Activated T-helper 1 cell treated with anti-CD3 and anti-CD28 coated beads, Interleukin-12 subunit alpha, Interleukin-12 subunit beta, Interleukin-2, Interleukin-4 antibody, amounts not matched to agents 30 ng/mL and 10 ng/mL and 1 ng/mL, durations not matched to agents 14 hours and 24 hours and 36 hours (primary cell): ENCODE measurements at regions of chr12 and their contacts with region 1.

Region 1: DNA sequence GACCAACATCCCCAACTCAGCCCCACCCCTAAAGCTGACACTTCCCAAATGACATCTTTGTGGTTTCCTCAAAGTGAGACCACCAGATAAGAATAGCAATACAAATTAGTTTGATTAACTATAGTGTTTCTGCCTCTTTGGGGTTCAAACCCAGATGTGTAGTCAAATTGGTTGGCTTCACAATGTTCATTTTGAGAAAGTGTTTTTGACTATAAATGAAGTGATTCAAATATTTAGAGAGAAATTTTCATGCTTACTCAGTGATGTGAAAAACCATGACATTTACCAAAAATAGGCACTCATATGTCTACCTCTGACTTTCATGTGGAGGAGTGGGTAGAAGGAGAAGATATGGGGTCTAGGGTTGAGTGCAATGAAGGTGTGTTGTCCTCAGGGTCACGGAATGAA is 218.4 kb downstream of the BCAT1 start:
- DNase-seq: no peak
- H3K4me3 Mint-ChIP-seq: no peak overlapping the region
- H3K27ac Mint-ChIP-seq: no peak overlapping the region
- H3K4me1 Mint-ChIP-seq: peaks cover 19% of the 10 kb centered on the region
- H3K27me3 Mint-ChIP-seq: no peaks in the 10 kb centered on the region

Region 2: GRCh38 chr12:24596768-24597388 is 133.6 kb before region 1 on chr12:
- intact Hi-C with region 1: loop called (anchors 1 kb)
- DNase-seq: no peak
- H3K4me3 Mint-ChIP-seq: no peak overlapping the region
- H3K27ac Mint-ChIP-seq: no peak overlapping the region
- H3K4me1 Mint-ChIP-seq: no peaks in the 10 kb centered on the region
- H3K27me3 Mint-ChIP-seq: peaks cover 2% of the 10 kb centered on the region

Region 3: DNA sequence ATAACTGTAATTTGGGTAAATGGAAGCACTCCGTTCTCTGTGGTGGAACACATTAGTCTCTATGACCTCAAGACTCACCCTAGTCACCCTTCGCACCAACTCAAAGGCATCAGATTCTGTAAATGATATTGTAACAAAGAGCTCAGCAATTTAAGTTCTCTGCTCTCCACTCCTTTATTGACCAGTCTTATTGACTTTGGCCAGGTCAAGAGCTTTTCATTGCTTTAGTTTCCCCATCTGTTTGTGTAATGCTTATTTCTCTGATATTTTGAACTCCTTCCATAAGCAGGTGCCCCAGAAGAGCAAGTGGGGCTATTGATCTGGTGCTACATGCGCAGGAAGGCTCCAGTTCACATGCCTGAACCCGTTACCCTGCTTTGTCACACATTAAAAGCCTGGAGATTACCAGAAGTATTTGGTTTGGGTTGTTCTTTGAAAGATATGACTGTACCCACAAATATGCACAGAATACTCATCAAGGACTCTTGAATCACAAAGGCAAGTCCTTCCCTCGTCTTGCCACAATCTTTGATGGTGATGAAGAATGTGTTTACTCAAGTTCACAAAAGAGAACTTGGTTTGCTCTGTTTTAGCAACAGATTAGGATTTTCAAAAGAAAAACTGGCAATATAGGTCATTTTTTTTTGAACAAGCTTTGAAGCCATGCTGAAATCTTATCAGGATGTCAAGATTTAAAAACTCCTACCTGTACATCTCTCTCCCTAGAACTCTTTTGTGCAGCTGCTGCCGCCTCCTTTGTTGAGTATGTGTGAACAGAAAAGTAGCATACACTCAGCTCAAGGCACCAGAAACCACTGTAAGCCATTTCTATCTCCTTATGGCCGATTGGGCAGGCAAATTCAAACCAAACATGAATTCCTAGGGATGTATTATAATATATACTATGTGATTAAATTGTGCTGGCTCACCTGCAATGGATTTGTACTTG is 24.5 kb after region 1 on chr12:
- intact Hi-C with region 1: loop called (anchors 1 kb)
- DNase-seq: no peak
- H3K4me3 Mint-ChIP-seq: peak overlapping the region; percentile 54
- H3K27ac Mint-ChIP-seq: peak overlapping the region; percentile 85
- H3K4me1 Mint-ChIP-seq: peaks cover 51% of the 10 kb centered on the region
- H3K27me3 Mint-ChIP-seq: no peaks in the 10 kb centered on the region

Region 4: DNA sequence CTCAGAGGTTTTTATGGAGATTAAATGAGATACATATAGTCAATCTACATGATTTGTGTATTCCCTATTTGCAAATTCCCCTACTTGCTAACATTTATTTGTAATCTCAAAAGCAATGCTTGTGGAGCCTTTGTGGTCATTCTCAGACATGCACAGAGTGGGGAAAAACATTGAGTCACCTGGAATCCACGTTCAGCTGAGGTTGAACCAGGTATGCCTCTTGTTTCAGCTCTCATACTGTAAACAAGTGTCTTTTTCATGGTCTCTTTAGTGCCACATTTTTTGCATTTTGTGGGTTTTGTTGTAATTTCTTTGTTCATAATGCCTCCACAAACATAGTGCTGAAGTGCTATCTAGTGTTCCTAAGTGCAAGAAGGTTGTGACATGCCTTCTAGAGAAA is 36.5 kb after region 1 on chr12:
- intact Hi-C with region 1: loop called (anchors 1 kb)
- DNase-seq: no peak
- H3K4me3 Mint-ChIP-seq: no peak overlapping the region
- H3K27ac Mint-ChIP-seq: no peak overlapping the region
- H3K4me1 Mint-ChIP-seq: peaks cover 7% of the 10 kb centered on the region
- H3K27me3 Mint-ChIP-seq: no peaks in the 10 kb centered on the region

Region 5: GRCh38 chr12:24822121-24822899 is 91.8 kb after region 1 on chr12:
- intact Hi-C with region 1: loop called (anchors 5 kb)
- DNase-seq: no peak
- H3K4me3 Mint-ChIP-seq: peak overlapping the region; percentile 48
- H3K27ac Mint-ChIP-seq: peak overlapping the region; percentile 91
- H3K4me1 Mint-ChIP-seq: peaks cover 29% of the 10 kb centered on the region
- H3K27me3 Mint-ChIP-seq: no peaks in the 10 kb centered on the region

Region 6: DNA sequence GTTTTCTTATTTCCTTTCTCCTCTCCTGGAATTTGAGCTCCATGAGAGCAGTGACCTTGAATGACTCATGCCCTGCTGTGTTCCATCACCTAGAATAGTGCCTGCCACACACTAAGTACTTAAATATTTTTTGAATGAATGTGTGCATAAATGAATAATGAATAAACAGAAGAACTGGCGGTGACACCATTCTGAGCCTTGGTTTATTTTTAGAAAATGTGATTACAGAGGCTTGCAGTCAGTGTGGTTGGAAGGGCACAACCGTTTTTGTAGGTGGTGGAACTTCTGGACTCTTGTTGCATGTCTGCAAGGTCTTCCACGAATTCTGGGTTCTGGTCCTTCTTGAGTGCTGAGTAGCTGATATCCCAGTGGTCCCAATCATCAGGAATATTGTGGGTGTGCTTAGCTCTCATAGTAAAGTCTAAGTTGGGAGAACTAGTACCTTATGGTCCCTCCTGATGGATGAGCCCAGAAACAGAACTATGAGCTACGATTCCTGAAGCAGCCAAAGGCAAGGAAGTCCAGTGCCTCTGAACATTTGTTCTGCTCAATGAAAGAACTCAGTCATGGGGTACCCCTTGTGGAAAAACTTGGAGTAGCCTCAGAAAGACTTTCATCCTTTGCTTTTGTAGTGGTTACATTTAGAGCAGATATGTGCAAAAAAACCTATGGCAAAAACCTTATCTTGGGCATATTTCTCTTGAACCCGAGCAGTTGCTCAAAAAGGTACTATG is 1423.1 kb after region 1 on chr12:
- intact Hi-C with region 1: no loop called
- DNase-seq: no peak
- H3K4me3 Mint-ChIP-seq: no peak overlapping the region
- H3K27ac Mint-ChIP-seq: no peak overlapping the region
- H3K4me1 Mint-ChIP-seq: no peaks in the 10 kb centered on the region
- H3K27me3 Mint-ChIP-seq: peaks cover 14% of the 10 kb centered on the region